ENCODE measurements at regions of chr10 and their contacts with region 1.

Region 1: GRCh38 chr10:104580774-104581675 is 60.1 kb upstream of the SORCS3 start:
- H3K4me3 Mint-ChIP-seq: no peak overlapping the region
- H3K27ac Mint-ChIP-seq: no peak overlapping the region
- H3K4me1 Mint-ChIP-seq: no peaks in the 10 kb centered on the region
- H3K27me3 Mint-ChIP-seq: peaks cover 34% of the 10 kb centered on the region

Region 2: GRCh38 chr10:104337974-104338735 is 242.9 kb before region 1 on chr10 and contains the start of gene ITPRIP:
- intact Hi-C with region 1: no loop called
- H3K4me3 Mint-ChIP-seq: peak within 1 kb of the TSS; percentile 88
- H3K27ac Mint-ChIP-seq: peak within 1 kb of the TSS; percentile 94
- H3K4me1 Mint-ChIP-seq: peaks cover 60% of the 10 kb centered on the region
- H3K27me3 Mint-ChIP-seq: peaks cover 9% of the 10 kb centered on the region

Region 3: DNA sequence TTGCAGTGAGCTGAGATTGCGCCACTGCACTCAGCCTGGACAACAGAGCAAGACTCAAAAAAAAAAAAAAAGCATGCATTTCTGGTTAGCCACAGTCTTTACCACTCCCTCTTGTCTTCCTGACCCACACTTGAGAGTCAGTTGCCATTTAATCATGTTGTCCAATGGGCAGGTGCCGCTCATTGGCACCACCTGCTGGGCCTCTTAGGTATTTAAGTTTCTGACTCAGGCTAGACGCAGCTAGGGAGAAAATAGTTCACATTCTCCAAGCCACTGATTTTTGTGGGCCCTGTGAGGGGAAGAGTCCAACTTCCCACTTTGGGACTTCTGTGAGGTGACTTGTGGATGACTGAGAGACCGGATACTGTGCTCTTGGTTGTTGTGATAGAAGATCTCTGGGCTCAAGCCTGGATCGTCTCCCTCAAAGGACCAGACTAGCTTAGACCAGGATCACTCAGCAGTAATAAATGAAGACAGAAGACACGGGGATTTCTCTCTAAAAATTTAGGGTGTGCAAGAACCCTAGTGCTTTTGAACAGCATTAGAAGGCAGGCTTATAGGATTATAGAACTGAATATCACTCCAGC is 33.3 kb after region 1 on chr10:
- intact Hi-C with region 1: loop called (anchors 1 kb)
- H3K4me3 Mint-ChIP-seq: no peak overlapping the region
- H3K27ac Mint-ChIP-seq: no peak overlapping the region
- H3K4me1 Mint-ChIP-seq: no peaks in the 10 kb centered on the region
- H3K27me3 Mint-ChIP-seq: peaks cover 9% of the 10 kb centered on the region